Head of caudate nucleus (tissue), 42 donors: ENCODE measurements at regions of chr5 and their contacts with region 1.

Region 1: GRCh38 chr5:175444060-175444904 is at the start of gene DRD1:
- DNase-seq: peak; percentile 17 to 86 (median 74)

Region 2: GRCh38 chr5:174951146-174951780 is 493.0 kb before region 1 on chr5:
- intact Hi-C with region 1: loop called (anchors 5 kb)
- DNase-seq: peak; percentile 36 to 89 (median 73)